ENCODE measurements at regions of chr19 and their contacts with region 1.

Region 1: DNA sequence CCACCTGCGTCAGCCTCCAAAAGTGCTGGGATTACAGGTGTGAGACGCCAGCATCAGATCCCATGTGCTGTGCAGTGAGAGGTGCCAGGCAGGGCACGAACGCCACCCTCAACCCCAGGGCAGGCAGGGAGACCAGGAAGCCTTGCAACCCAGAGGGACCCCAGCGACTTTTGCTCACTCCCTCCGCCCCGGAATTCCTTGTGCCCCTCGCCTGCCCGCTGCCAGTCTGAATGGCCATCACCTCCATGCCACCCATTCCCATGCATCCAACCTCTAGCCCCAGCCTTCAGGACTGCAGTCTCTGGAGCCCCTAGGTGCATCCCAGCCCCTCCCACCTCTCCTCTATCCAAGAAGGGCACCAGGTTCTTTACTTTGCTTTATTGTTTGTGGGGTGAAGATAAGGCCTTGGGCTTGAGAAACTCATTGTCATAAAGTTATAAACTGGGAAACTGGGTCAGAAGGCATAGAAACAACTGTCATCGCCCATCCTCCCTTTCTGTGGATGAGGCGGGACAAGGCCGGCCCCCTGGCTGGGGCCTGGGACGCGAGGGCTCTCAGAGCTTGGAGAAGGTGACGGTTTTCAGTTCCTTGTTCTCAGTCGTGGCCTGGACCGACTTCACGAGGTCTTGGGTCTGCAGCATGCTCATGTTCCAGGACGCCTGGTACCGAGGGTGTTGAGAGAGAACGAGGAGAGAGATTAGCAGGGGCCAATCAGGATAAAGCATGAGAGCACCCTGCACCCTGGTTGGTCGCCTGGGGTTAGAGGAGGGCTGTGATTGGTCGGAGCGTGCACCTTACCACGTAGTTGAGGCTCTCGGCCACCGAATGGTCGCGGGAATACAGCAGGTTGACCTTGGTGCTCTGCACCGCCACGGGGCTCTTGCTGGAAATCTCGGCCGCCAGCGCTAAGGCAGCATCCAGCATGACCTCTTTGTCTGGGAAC is 2.6 kb upstream of the LGALS4 start:
- DNase-seq: no peak
- ATAC-seq: no peak
- H3K4me3 ChIP-seq: no peak overlapping the region
- H3K27ac ChIP-seq: no peak overlapping the region
- H3K4me1 ChIP-seq: peaks cover 36% of the 10 kb centered on the region
- H3K27me3 ChIP-seq: no peaks in the 10 kb centered on the region
- CTCF ChIP-seq: no peak
- EP300 ChIP-seq: no peak
- POLR2A ChIP-seq: 0 out of 4 replicates have a peak, but pooled peaks of 1 of the 2 experiments have one; percentile 18
- RAD21 ChIP-seq: no peak

Region 2: GRCh38 chr19:38838573-38839269 is 23.4 kb after region 1 on chr19:
- CTCF ChIA-PET with region 1: no interaction called
- POLR2A ChIA-PET with region 1: interaction called, 77 read pairs
- in situ Hi-C with region 1: no loop called
- intact Hi-C with region 1: no loop called
- DNase-seq: no peak
- ATAC-seq: peak; percentile 4
- H3K4me3 ChIP-seq: no peak overlapping the region
- H3K27ac ChIP-seq: peak overlapping the region; percentile 60
- H3K4me1 ChIP-seq: peaks cover 68% of the 10 kb centered on the region
- H3K27me3 ChIP-seq: no peaks in the 10 kb centered on the region
- CTCF ChIP-seq: 0 out of 2 replicates have a peak, but pooled peaks have one; percentile 9
- EP300 ChIP-seq: no peak
- POLR2A ChIP-seq: peak in 1 of 2 experiments; percentile 2; a peak in 1 of 4 replicates
- RAD21 ChIP-seq: no peak

Region 3: DNA sequence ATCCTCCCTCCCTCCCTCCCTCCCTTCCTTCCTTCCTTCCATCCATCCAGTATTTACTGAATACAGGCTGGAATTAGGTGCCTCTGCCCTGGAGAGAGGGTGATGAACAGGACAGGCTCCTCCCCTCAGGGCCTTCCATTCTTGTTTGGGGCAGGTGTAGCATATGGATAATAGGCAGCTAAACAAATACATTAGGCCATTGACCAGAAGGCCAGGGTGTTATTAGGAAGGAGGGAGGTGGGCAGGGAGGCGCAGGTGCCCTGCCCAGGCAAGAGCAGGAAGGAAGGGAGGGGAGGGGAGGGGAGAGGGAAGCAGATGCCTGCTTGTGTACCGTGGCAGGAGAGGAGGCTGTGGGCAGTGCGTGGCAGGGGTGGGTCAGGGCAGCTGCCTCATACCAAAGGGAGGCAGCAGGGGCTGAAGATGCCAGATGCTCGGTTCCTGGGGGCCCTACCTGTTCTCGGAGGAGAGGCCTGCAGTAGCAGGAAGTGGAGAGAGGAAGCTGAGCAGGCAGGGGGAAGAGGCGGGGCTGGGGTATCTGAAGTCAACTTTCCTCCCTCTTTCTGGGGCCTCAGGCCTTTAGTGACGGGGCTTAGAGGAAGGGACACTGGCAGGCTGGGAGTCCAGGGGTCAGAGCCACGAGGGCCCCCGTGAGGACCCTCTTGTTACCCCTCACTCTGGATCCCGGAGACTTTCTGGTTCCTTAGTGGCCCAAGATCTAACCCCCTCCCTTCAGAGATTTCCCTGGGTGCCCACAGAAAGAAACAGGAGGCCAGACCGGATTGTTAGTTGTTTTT is 62.6 kb after region 1 on chr19 and contains the start of gene RINL:
- CTCF ChIA-PET with region 1: no interaction called
- POLR2A ChIA-PET with region 1: interaction called, 10 read pairs
- in situ Hi-C with region 1: no loop called
- intact Hi-C with region 1: no loop called
- DNase-seq: no peak
- ATAC-seq: peak; percentile 76
- H3K4me3 ChIP-seq: peak within 1 kb of the TSS; percentile 72 to 86 (median 82)
- H3K27ac ChIP-seq: peak within 1 kb of the TSS; percentile 58
- H3K4me1 ChIP-seq: peaks cover 45% of the 10 kb centered on the region
- H3K27me3 ChIP-seq: no peaks in the 10 kb centered on the region
- CTCF ChIP-seq: no peak
- EP300 ChIP-seq: no peak
- POLR2A ChIP-seq: peak; percentile 36 to 73; a peak in 2 of 4 replicates
- RAD21 ChIP-seq: no peak
- total RNA-seq, gene RINL: 10.3 and 11.4 TPM in 2 replicates

Region 4: GRCh38 chr19:38929929-38930775 is 114.8 kb after region 1 on chr19 and contains the start of gene SARS2:
- CTCF ChIA-PET with region 1: no interaction called
- POLR2A ChIA-PET with region 1: no interaction called
- in situ Hi-C with region 1: no loop called
- intact Hi-C with region 1: no loop called
- DNase-seq: peak; percentile 89
- ATAC-seq: peak; percentile 46
- H3K4me3 ChIP-seq: peak within 1 kb of the TSS; percentile 77 to 84 (median 81)
- H3K27ac ChIP-seq: peak within 1 kb of the TSS; percentile 91
- H3K4me1 ChIP-seq: peaks cover 50% of the 10 kb centered on the region
- H3K27me3 ChIP-seq: no peaks in the 10 kb centered on the region
- CTCF ChIP-seq: peak; percentile 99
- EP300 ChIP-seq: 0 out of 4 replicates have a peak, but pooled peaks of 1 of the 2 experiments have one; percentile 39
- POLR2A ChIP-seq: peak in 1 of 2 experiments; percentile 97; a peak in 3 of 4 replicates
- RAD21 ChIP-seq: peak; percentile 84
- total RNA-seq, gene SARS2: 30.1 and 48.6 TPM in 2 replicates